ENCODE measurements at regions of chr14 and their contacts with region 1.

Region 1: DNA sequence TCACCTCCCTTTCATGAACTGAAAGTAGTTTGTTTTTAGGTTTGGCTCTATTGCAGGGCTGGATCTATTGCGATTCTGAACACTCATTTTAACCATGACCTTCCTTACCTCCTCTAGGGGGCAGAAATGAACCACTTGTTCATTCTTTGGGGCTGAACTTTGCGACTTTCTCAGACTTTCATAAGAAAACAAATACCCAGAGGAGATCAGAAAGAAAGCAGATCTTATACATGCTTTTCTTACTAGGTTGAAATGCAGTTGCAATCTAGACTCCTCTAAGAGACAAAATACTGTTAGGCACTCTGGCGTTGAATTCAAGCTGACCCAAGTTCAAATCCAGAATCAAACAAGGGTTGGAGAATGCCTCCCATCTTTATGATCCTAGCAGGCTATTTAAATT is 32.6 kb upstream of the PLEKHG3 start:
- DNase-seq: no peak
- H3K4me3 Mint-ChIP-seq: no peak overlapping the region
- H3K27ac Mint-ChIP-seq: no peak overlapping the region
- H3K4me1 Mint-ChIP-seq: peaks cover 36% of the 10 kb centered on the region
- H3K27me3 Mint-ChIP-seq: peaks cover 18% of the 10 kb centered on the region

Region 2: GRCh38 chr14:64501411-64502171 is 170.0 kb before region 1 on chr14:
- intact Hi-C with region 1: no loop called
- DNase-seq: no peak
- H3K4me3 Mint-ChIP-seq: peak overlapping the region; percentile 96
- H3K27ac Mint-ChIP-seq: peak overlapping the region; percentile 96
- H3K4me1 Mint-ChIP-seq: peaks cover 60% of the 10 kb centered on the region
- H3K27me3 Mint-ChIP-seq: peaks cover 2% of the 10 kb centered on the region

Region 3: GRCh38 chr14:64614805-64615391 is 56.7 kb before region 1 on chr14:
- intact Hi-C with region 1: no loop called
- DNase-seq: no peak
- H3K4me3 Mint-ChIP-seq: no peak overlapping the region
- H3K27ac Mint-ChIP-seq: no peak overlapping the region
- H3K4me1 Mint-ChIP-seq: no peaks in the 10 kb centered on the region
- H3K27me3 Mint-ChIP-seq: peaks cover 6% of the 10 kb centered on the region

Region 4: GRCh38 chr14:64708148-64709004 is 36.8 kb after region 1 on chr14:
- intact Hi-C with region 1: loop called (anchors 5 kb)
- DNase-seq: peak; percentile 57
- H3K4me3 Mint-ChIP-seq: peak overlapping the region; percentile 47
- H3K27ac Mint-ChIP-seq: peak overlapping the region; percentile 83
- H3K4me1 Mint-ChIP-seq: peaks cover 70% of the 10 kb centered on the region
- H3K27me3 Mint-ChIP-seq: peaks cover 10% of the 10 kb centered on the region

Region 5: DNA sequence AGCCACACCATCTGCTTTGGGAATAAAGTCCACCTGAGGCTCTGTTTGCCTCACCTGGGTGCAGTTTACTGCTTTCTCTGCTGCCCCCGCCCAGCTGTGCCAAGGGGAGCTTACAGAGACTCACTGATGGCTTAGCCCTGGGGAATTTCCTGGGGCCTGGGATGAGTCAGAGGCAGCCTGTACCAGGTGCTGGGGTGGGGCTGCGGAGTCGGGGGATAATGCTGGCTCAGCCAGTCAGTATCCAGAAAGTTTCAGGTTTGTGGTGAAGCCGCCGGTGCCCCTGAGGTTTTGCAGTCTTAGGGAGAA is 54.9 kb after region 1 on chr14:
- intact Hi-C with region 1: loop called (anchors 5 kb)
- DNase-seq: no peak
- H3K4me3 Mint-ChIP-seq: no peak overlapping the region
- H3K27ac Mint-ChIP-seq: no peak overlapping the region
- H3K4me1 Mint-ChIP-seq: peaks cover 77% of the 10 kb centered on the region
- H3K27me3 Mint-ChIP-seq: peaks cover 1% of the 10 kb centered on the region

Region 6: GRCh38 chr14:64764641-64765520 is 93.3 kb after region 1 on chr14:
- intact Hi-C with region 1: loop called (anchors 1 kb)
- DNase-seq: peak; percentile 56
- H3K4me3 Mint-ChIP-seq: peak overlapping the region; percentile 27
- H3K27ac Mint-ChIP-seq: no peak overlapping the region
- H3K4me1 Mint-ChIP-seq: peaks cover 52% of the 10 kb centered on the region
- H3K27me3 Mint-ChIP-seq: peaks cover 13% of the 10 kb centered on the region

Region 7: DNA sequence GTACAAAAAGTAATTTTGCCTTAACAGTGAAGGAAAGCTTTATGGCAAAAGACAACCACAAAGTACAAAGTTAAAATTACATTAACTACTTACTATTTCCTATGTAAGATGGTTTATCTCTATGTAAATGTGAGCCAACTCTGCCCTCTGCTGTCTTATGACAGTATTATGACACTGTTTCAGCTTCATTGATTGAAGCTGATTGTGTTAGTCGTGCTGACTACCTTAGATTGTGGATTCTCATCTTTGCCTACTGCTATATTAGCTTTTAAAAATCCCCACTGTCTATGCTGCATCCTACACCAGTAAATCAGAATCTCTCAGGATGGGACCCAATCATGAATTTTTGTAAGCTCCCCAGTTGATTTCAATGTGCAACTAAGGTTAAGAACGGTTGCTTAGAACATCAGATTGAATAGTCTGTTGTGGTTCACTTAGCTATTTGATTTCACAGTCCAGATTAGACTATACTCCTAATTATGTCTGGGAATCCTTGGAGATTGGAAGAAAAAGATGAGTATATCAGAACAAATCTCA is 220.3 kb after region 1 on chr14:
- intact Hi-C with region 1: loop called (anchors 5 kb)
- DNase-seq: peak; percentile 24
- H3K4me3 Mint-ChIP-seq: no peak overlapping the region
- H3K27ac Mint-ChIP-seq: no peak overlapping the region
- H3K4me1 Mint-ChIP-seq: no peaks in the 10 kb centered on the region
- H3K27me3 Mint-ChIP-seq: peaks cover 42% of the 10 kb centered on the region

Measured in activated T-helper 1 cell treated with anti-CD3 and anti-CD28 coated beads, Interleukin-12 subunit alpha, Interleukin-12 subunit beta, Interleukin-2, Interleukin-4 antibody, amounts not matched to agents 30 ng/mL and 10 ng/mL and 1 ng/mL, durations not matched to agents 14 hours and 24 hours and 36 hours (primary cell).